ENCODE measurements at regions of chr22 and their contacts with region 1.

Region 1: GRCh38 chr22:24845041-24845898 is 39.3 kb downstream of the SGSM1 start:
- DNase-seq: no peak
- H3K4me3 ChIP-seq: no peak overlapping the region
- H3K27ac ChIP-seq: no peak overlapping the region
- H3K4me1 ChIP-seq: no peaks in the 10 kb centered on the region
- H3K27me3 ChIP-seq: no peaks in the 10 kb centered on the region
- CTCF ChIP-seq: no peak
- POLR2A ChIP-seq: no peak

Region 2: DNA sequence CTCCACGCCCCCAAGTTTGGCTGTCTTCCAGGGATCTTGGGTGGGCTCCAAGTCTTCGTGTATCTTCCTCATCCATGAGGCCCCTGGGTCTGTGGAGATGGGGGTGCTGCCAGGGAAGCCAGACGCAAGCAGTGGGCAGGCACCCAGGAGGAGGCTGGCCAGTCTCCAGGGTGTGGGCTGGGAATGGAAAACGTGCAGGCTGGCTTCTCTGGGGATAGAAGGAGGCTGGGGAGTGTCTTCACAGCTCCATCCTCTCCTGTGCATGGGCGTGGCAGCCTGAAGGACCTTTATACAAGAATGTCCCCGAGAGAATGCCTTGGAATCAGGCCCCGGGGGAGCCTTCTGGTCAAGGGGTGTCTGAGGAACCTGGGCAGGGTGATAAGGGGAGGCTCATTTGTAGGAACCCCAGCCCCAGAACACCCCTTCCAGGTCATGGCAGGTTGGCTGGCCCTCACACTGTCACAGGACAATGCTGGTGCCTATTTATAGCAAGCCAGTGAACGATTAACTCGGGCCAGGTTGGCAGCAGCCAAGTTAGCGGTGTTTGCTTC is 25.3 kb before region 1 on chr22:
- CTCF ChIA-PET with region 1: interaction called, 10 read pairs
- POLR2A ChIA-PET with region 1: no interaction called
- dilution Hi-C with region 1: no loop called
- intact Hi-C with region 1: no loop called
- DNase-seq: no peak
- H3K4me3 ChIP-seq: no peak overlapping the region
- H3K27ac ChIP-seq: no peak overlapping the region
- H3K4me1 ChIP-seq: no peaks in the 10 kb centered on the region
- H3K27me3 ChIP-seq: no peaks in the 10 kb centered on the region
- CTCF ChIP-seq: no peak
- POLR2A ChIP-seq: no peak

Region 3: GRCh38 chr22:24834845-24835570 is 10.3 kb before region 1 on chr22:
- CTCF ChIA-PET with region 1: interaction called, 13 read pairs
- POLR2A ChIA-PET with region 1: no interaction called
- dilution Hi-C with region 1: no loop called
- intact Hi-C with region 1: no loop called
- DNase-seq: peak; percentile 26
- H3K4me3 ChIP-seq: no peak overlapping the region
- H3K27ac ChIP-seq: no peak overlapping the region
- H3K4me1 ChIP-seq: no peaks in the 10 kb centered on the region
- H3K27me3 ChIP-seq: peaks cover 2 to 3% of the 10 kb centered on the region in 2 experiments
- CTCF ChIP-seq: peak; percentile 33 to 48
- POLR2A ChIP-seq: no peak

Region 4: GRCh38 chr22:24867323-24868022 is 22.2 kb after region 1 on chr22:
- CTCF ChIA-PET with region 1: interaction called, 12 read pairs
- POLR2A ChIA-PET with region 1: no interaction called
- dilution Hi-C with region 1: no loop called
- intact Hi-C with region 1: no loop called
- DNase-seq: no peak
- H3K4me3 ChIP-seq: no peak overlapping the region
- H3K27ac ChIP-seq: no peak overlapping the region
- H3K4me1 ChIP-seq: no peaks in the 10 kb centered on the region
- H3K27me3 ChIP-seq: no peaks in the 10 kb centered on the region
- CTCF ChIP-seq: no peak
- POLR2A ChIP-seq: no peak

Region 5: GRCh38 chr22:24951942-24952836 is 106.9 kb after region 1 on chr22 and contains the start of gene KIAA1671:
- CTCF ChIA-PET with region 1: no interaction called
- POLR2A ChIA-PET with region 1: no interaction called
- dilution Hi-C with region 1: no loop called
- intact Hi-C with region 1: no loop called
- DNase-seq: peak; percentile 87
- H3K4me3 ChIP-seq: peak within 1 kb of the TSS; percentile 56 to 82 (median 70)
- H3K27ac ChIP-seq: peak within 1 kb of the TSS; percentile 94
- H3K4me1 ChIP-seq: peaks cover 9% of the 10 kb centered on the region
- H3K27me3 ChIP-seq: peaks cover 0 to 9% of the 10 kb centered on the region in 2 experiments
- CTCF ChIP-seq: peak; percentile 99 to 100
- POLR2A ChIP-seq: no peak
- total RNA-seq, gene KIAA1671: 78.9 and 85.1 TPM in 2 replicates

Region 6: DNA sequence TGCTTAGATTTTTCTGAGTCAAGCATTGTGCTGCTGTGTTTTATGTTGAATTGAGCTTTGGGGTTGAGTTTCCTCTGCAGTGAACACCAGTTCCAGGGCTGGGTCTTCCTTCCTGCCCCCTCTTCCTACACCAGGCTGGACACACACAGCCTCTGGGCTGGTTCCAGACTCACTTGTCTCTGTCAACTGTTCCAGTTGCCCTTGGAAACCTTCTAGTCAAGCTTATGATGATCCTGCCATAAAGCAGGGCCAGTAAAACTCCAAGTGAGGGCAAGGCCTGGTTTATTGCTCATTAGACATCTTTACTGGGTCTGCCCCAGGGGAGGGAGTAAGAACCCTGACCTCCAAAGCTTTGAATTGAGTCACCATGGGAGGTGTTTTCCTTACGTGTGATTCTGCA is 168.3 kb after region 1 on chr22:
- CTCF ChIA-PET with region 1: no interaction called
- POLR2A ChIA-PET with region 1: no interaction called
- dilution Hi-C with region 1: no loop called
- intact Hi-C with region 1: no loop called
- DNase-seq: peak; percentile 74
- H3K4me3 ChIP-seq: no peak overlapping the region
- H3K27ac ChIP-seq: peak overlapping the region; percentile 55
- H3K4me1 ChIP-seq: peaks cover 30% of the 10 kb centered on the region
- H3K27me3 ChIP-seq: no peaks in the 10 kb centered on the region
- CTCF ChIP-seq: no peak
- POLR2A ChIP-seq: no peak